PC-3 (cell line): ENCODE measurements at regions of chr2 and their contacts with region 1.

Region 1: GRCh38 chr2:223993621-223994232 is 36.5 kb downstream of the MRPL44 start:
- DNase-seq: peak; percentile 81
- ATAC-seq: peak; percentile 67
- H3K4me3 ChIP-seq: no peak overlapping the region
- H3K27ac ChIP-seq: no peak overlapping the region
- H3K4me1 ChIP-seq: peaks cover 10% of the 10 kb centered on the region; the same call in 1 of the 2 replicates
- H3K27me3 ChIP-seq: no peaks in the 10 kb centered on the region
- CTCF ChIP-seq: peak; percentile 89

Region 2: DNA sequence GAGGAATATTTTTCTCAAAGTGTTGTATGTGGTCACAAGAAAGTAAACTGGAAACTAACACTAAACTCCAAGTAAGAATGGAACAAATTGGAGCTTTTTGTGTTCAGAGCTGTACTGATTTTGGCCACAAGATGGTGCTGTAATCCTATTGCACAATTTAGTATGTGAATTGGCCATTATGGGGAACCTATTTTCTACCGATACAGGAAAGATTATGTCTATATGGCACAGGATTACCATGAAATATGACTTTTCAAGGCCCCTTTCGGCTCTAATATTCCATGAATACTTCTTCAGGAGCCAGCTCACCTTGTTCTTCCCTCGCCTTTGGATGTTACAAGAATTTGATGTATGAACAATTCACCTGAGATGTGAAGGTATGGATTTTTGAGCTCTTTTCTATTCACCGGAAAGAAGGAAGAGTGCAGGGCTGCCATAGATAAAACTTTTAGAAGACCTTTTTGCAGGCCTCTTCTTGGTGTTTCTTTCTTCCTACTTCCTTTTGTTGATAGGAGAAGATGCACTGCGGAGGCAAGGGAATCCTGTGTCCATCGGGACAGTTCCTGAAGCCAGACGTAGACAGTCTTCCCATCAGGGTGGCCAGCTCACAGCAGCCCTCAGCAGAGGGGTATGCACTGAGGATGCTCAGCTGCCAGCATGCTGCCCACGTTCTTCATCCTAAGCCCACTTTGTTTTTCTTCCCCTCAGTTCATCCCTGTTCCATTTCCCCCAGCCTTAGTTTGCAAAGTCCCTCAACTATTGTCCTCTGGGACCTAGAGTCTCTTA is 23.2 kb before region 1 on chr2:
- CTCF ChIA-PET with region 1: interaction called, 26 read pairs
- POLR2A ChIA-PET with region 1: no interaction called
- intact Hi-C with region 1: loop called (anchors 2 kb)
- DNase-seq: peak; percentile 85
- ATAC-seq: peak; percentile 68
- H3K4me3 ChIP-seq: no peak overlapping the region
- H3K27ac ChIP-seq: no peak overlapping the region
- H3K4me1 ChIP-seq: peaks cover 15% of the 10 kb centered on the region
- H3K27me3 ChIP-seq: no peaks in the 10 kb centered on the region
- CTCF ChIP-seq: peak; percentile 94

Region 3: GRCh38 chr2:224039124-224039940 is 45.6 kb after region 1 on chr2 and contains the start of gene SERPINE2:
- CTCF ChIA-PET with region 1: interaction called, 3 read pairs
- POLR2A ChIA-PET with region 1: no interaction called
- intact Hi-C with region 1: loop called (anchors 1 kb)
- DNase-seq: peak; percentile 69
- ATAC-seq: peak; percentile 74
- H3K4me3 ChIP-seq: peak within 1 kb of the TSS; percentile 72
- H3K27ac ChIP-seq: no peak within 1 kb of the TSS
- H3K4me1 ChIP-seq: peaks cover 16% of the 10 kb centered on the region
- H3K27me3 ChIP-seq: no peaks in the 10 kb centered on the region
- CTCF ChIP-seq: peak; percentile 70
- total RNA-seq, gene SERPINE2: 17.1 and 18.8 TPM in 2 replicates

Region 4: GRCh38 chr2:224145751-224146355 is 152.1 kb after region 1 on chr2:
- CTCF ChIA-PET with region 1: interaction called, 3 read pairs
- POLR2A ChIA-PET with region 1: no interaction called
- intact Hi-C with region 1: loop called (anchors 2 kb)
- DNase-seq: peak; percentile 79
- ATAC-seq: peak; percentile 58
- H3K4me3 ChIP-seq: no peak overlapping the region
- H3K27ac ChIP-seq: peak overlapping the region; percentile 75
- H3K4me1 ChIP-seq: peaks cover 53% of the 10 kb centered on the region
- H3K27me3 ChIP-seq: no peaks in the 10 kb centered on the region
- CTCF ChIP-seq: no peak

Region 5: DNA sequence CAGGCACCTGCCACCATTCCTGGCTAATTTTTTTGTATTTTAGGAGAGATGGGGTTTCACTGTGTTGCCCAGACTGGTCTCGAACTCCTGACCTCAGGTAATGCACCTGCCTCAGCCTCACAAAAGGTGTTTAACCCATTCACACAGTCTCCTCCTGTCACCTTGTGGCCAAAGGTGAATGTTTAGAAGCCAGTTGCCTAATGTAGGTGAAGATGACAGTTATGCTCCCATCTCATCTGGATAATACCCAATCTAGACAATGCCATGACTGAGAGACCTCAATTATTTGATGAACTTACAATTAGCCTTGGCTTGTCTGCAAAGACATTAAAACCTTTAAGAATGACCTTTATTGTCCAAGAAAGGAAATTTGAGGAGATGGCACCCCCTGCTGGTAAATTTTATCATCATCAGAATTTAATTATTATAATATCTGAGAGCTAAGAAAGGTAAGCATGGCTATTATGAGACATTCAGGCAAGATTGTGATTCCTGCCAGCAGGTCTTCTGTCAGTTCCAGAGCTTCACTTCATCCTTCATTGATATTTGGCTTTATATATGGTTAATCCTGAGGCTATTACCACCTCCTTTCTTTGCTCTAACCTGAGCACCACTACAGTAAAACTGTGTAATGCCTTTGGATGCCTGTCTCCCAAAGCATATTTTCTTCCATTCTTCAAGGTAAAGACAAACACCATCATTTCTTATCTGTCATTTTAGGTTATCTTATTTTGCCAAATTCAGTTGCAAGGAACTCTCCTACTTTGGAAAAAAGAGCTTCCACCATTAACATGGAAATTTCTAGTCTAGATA is 290.6 kb after region 1 on chr2:
- CTCF ChIA-PET with region 1: interaction called, 33 read pairs
- POLR2A ChIA-PET with region 1: no interaction called
- intact Hi-C with region 1: loop called (anchors 1 kb)
- DNase-seq: peak; percentile 73
- ATAC-seq: peak; percentile 77
- H3K4me3 ChIP-seq: no peak overlapping the region
- H3K27ac ChIP-seq: no peak overlapping the region
- H3K4me1 ChIP-seq: no peaks in the 10 kb centered on the region
- H3K27me3 ChIP-seq: no peaks in the 10 kb centered on the region
- CTCF ChIP-seq: peak; percentile 93; the same call in 1 of the 2 replicates

Region 6: DNA sequence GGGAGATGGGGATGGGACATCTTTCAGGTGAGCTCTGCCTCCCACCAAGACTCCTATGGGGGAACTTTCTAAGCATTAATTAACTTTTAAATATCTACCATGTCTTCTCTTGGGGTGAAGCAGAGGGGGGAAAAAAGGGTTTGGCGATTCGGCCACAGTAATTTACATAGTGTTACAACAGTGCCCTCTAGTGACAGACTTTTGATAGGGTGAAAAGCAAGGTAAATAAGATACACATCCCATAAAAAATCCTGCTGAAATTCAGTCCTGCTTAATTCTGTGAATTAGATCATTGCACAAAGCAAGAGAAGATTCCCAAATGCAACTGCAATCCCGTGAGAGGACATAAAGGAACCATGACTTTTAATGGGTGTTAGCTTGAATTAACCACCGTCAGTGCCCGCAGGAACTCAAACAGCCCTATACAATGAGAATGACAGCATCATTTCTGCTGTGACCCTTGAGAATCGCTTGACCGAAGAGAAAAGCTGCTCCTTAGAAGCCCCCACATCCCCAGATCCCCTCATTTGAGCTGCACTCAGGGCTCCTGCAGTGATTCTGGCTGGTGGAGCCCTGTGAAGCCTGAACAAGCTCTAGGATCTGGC is 375.4 kb after region 1 on chr2:
- CTCF ChIA-PET with region 1: no interaction called
- POLR2A ChIA-PET with region 1: no interaction called
- intact Hi-C with region 1: loop called (anchors 5 kb)
- DNase-seq: peak; percentile 77
- ATAC-seq: peak; percentile 45
- H3K4me3 ChIP-seq: no peak overlapping the region
- H3K27ac ChIP-seq: no peak overlapping the region
- H3K4me1 ChIP-seq: peaks cover 18% of the 10 kb centered on the region; the same call in 1 of the 2 replicates
- H3K27me3 ChIP-seq: no peaks in the 10 kb centered on the region
- CTCF ChIP-seq: peak; percentile 81